ENCODE measurements at regions of chr11 and their contacts with region 1.

Region 1: GRCh38 chr11:128172046-128172878 is 415.1 kb downstream of the ETS1 start:
- DNase-seq: peak; percentile 86
- ATAC-seq: peak; percentile 70
- H3K4me3 ChIP-seq: no peak overlapping the region
- H3K4me3 Mint-ChIP-seq: no peak overlapping the region
- H3K27ac ChIP-seq: no peak overlapping the region
- H3K27ac Mint-ChIP-seq: no peak overlapping the region
- H3K4me1 ChIP-seq: peaks cover 3 to 4% of the 10 kb centered on the region in 2 donors
- H3K4me1 Mint-ChIP-seq: peaks cover 3% of the 10 kb centered on the region
- H3K27me3 ChIP-seq: peaks cover 0 to 4% (median 0%) of the 10 kb centered on the region in 4 experiments
- H3K27me3 Mint-ChIP-seq: peaks cover 10% of the 10 kb centered on the region
- CTCF ChIP-seq: peak; percentile 89

Region 2: DNA sequence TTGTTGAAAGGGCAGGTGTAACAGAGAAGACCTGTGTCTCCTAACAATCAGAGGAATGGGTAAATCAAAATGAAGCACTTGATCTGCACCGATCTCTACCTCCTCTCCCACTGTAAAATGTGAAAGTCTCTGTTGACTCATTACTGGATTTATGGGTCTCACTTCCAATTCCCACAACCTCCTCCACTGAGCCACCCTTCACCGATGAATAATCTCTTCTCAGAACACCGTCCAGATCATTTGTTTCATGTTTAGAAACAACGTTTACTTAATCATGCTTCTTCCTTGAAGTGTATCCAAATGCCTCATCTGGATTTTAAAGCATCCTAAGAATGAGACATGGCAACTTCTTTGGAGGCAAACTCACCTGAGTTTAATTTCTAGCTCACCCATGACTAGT is 228.5 kb before region 1 on chr11:
- CTCF ChIA-PET with region 1: no interaction called
- POLR2A ChIA-PET with region 1: no interaction called
- intact Hi-C with region 1: no loop called
- DNase-seq: no peak
- ATAC-seq: no peak
- H3K4me3 ChIP-seq: no peak overlapping the region
- H3K4me3 Mint-ChIP-seq: no peak overlapping the region
- H3K27ac ChIP-seq: no peak overlapping the region
- H3K27ac Mint-ChIP-seq: no peak overlapping the region
- H3K4me1 ChIP-seq: no peaks in the 10 kb centered on the region
- H3K4me1 Mint-ChIP-seq: no peaks in the 10 kb centered on the region
- H3K27me3 ChIP-seq: no peaks in the 10 kb centered on the region
- H3K27me3 Mint-ChIP-seq: peaks cover 5% of the 10 kb centered on the region
- CTCF ChIP-seq: no peak

Region 3: GRCh38 chr11:128290106-128290840 is 118.0 kb after region 1 on chr11:
- CTCF ChIA-PET with region 1: interaction called, 28 read pairs
- POLR2A ChIA-PET with region 1: no interaction called
- intact Hi-C with region 1: loop called (anchors 1 kb)
- DNase-seq: peak; percentile 91
- ATAC-seq: peak; percentile 71
- H3K4me3 ChIP-seq: peak overlapping the region in 4 of 5 experiments; percentile 33 to 48 (median 48)
- H3K4me3 Mint-ChIP-seq: peak overlapping the region; percentile 78
- H3K27ac ChIP-seq: peak overlapping the region; percentile 94 to 95
- H3K27ac Mint-ChIP-seq: peak overlapping the region; percentile 99
- H3K4me1 ChIP-seq: peaks cover 73 to 74% of the 10 kb centered on the region in 2 donors
- H3K4me1 Mint-ChIP-seq: peaks cover 95% of the 10 kb centered on the region
- H3K27me3 ChIP-seq: no peaks in the 10 kb centered on the region
- H3K27me3 Mint-ChIP-seq: no peaks in the 10 kb centered on the region
- CTCF ChIP-seq: peak; percentile 90

Region 4: GRCh38 chr11:128624269-128625175 is 452.3 kb after region 1 on chr11:
- CTCF ChIA-PET with region 1: interaction called, 215 read pairs
- POLR2A ChIA-PET with region 1: no interaction called
- intact Hi-C with region 1: no loop called
- DNase-seq: peak; percentile 92
- ATAC-seq: peak; percentile 85
- H3K4me3 ChIP-seq: peak overlapping the region in 2 of 5 experiments; percentile 3 to 43
- H3K4me3 Mint-ChIP-seq: peak overlapping the region; percentile 77
- H3K27ac ChIP-seq: peak overlapping the region; percentile 90 to 93
- H3K27ac Mint-ChIP-seq: peak overlapping the region; percentile 99
- H3K4me1 ChIP-seq: peaks cover 98% of the 10 kb centered on the region in 2 donors
- H3K4me1 Mint-ChIP-seq: peaks cover 96% of the 10 kb centered on the region
- H3K27me3 ChIP-seq: no peaks in the 10 kb centered on the region
- H3K27me3 Mint-ChIP-seq: no peaks in the 10 kb centered on the region
- CTCF ChIP-seq: no peak

Region 5: DNA sequence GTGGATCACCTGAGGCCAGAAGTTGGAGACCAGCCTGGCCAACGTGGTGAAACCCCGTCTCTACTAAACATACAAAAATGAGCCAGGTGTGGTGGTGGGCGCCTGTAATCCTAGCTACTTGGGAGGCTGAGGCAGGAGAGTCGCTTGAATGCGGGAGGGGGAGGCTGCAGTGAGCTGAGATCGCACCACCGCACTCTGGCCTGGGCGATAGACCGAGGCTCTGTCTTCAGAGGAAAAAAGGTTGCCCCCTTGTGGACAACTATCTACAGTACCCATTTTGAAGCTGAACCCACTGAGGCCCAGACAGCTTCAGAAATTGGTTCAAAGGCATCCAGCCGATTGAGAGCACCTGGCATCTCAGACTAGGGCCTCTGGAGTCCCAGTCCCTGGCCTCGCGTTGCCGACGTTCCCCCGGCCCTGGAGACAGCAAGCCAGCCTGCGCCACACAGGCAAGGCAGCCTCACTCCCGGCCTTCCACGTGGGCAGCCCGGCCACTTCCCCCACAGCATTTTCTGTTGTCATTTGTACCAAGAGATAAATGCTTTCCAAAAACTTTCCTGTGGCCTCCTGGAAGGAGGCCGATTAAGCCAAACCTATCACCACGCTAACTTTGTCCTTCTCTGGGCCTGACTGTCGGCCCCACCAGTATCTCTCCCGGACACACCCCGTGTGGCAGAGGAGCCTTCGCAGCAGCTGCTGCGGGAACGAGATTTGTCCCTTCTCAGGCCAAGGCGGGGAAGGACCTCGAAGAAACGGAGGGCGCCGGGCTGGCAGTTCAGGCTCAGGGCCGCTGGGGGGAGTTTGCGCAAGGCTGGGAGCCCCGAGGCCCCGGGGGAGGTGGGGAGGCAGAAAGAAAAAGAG is 604.4 kb after region 1 on chr11:
- CTCF ChIA-PET with region 1: interaction called, 16 read pairs
- POLR2A ChIA-PET with region 1: no interaction called
- intact Hi-C with region 1: loop called (anchors 1 kb)
- DNase-seq: peak; percentile 58
- ATAC-seq: peak; percentile 35
- H3K4me3 ChIP-seq: no peak overlapping the region
- H3K4me3 Mint-ChIP-seq: no peak overlapping the region
- H3K27ac ChIP-seq: no peak overlapping the region
- H3K27ac Mint-ChIP-seq: peak overlapping the region; percentile 51
- H3K4me1 ChIP-seq: peaks cover 25 to 36% of the 10 kb centered on the region in 2 donors
- H3K4me1 Mint-ChIP-seq: peaks cover 42% of the 10 kb centered on the region
- H3K27me3 ChIP-seq: no peaks in the 10 kb centered on the region
- H3K27me3 Mint-ChIP-seq: no peaks in the 10 kb centered on the region
- CTCF ChIP-seq: peak; percentile 60

Region 6: GRCh38 chr11:128884703-128885338 is 712.6 kb after region 1 on chr11:
- CTCF ChIA-PET with region 1: interaction called, 22 read pairs
- POLR2A ChIA-PET with region 1: no interaction called
- intact Hi-C with region 1: no loop called
- DNase-seq: peak; percentile 79
- ATAC-seq: peak; percentile 82
- H3K4me3 ChIP-seq: no peak overlapping the region
- H3K4me3 Mint-ChIP-seq: no peak overlapping the region
- H3K27ac ChIP-seq: no peak overlapping the region
- H3K27ac Mint-ChIP-seq: peak overlapping the region; percentile 54
- H3K4me1 ChIP-seq: peaks cover under 1 to 7% of the 10 kb centered on the region in 2 donors
- H3K4me1 Mint-ChIP-seq: peaks cover 3% of the 10 kb centered on the region
- H3K27me3 ChIP-seq: peaks cover 0 to 73% (median 48%) of the 10 kb centered on the region in 4 experiments
- H3K27me3 Mint-ChIP-seq: peaks cover 78% of the 10 kb centered on the region
- CTCF ChIP-seq: peak; percentile 85

Region 7: GRCh38 chr11:129331871-129332274 is 1159.6 kb after region 1 on chr11:
- CTCF ChIA-PET with region 1: interaction called, 4 read pairs
- POLR2A ChIA-PET with region 1: no interaction called
- intact Hi-C with region 1: loop called (anchors 5 kb)
- DNase-seq: peak; percentile 63
- ATAC-seq: peak; percentile 43
- H3K4me3 ChIP-seq: no peak overlapping the region
- H3K4me3 Mint-ChIP-seq: no peak overlapping the region
- H3K27ac ChIP-seq: no peak overlapping the region
- H3K27ac Mint-ChIP-seq: no peak overlapping the region
- H3K4me1 ChIP-seq: no peaks in the 10 kb centered on the region
- H3K4me1 Mint-ChIP-seq: peaks cover 3% of the 10 kb centered on the region
- H3K27me3 ChIP-seq: no peaks in the 10 kb centered on the region
- H3K27me3 Mint-ChIP-seq: peaks cover 3% of the 10 kb centered on the region
- CTCF ChIP-seq: peak; percentile 78